ENCODE measurements at regions of chr1 and their contacts with region 1.

Region 1: GRCh38 chr1:223748773-223749733 is 36.7 kb downstream of the CAPN2 start:
- DNase-seq: no peak
- H3K4me3 ChIP-seq: peak overlapping the region; percentile 27; the same call in 1 of the 2 replicates
- CTCF ChIP-seq: peak; percentile 80

Region 2: GRCh38 chr1:223700942-223701637 is 48.0 kb before region 1 on chr1:
- CTCF ChIA-PET with region 1: interaction called, 122 read pairs
- POLR2A ChIA-PET with region 1: interaction called, 8 read pairs
- DNase-seq: peak; percentile 97
- H3K4me3 ChIP-seq: peak overlapping the region; percentile 52
- CTCF ChIP-seq: no peak

Region 3: DNA sequence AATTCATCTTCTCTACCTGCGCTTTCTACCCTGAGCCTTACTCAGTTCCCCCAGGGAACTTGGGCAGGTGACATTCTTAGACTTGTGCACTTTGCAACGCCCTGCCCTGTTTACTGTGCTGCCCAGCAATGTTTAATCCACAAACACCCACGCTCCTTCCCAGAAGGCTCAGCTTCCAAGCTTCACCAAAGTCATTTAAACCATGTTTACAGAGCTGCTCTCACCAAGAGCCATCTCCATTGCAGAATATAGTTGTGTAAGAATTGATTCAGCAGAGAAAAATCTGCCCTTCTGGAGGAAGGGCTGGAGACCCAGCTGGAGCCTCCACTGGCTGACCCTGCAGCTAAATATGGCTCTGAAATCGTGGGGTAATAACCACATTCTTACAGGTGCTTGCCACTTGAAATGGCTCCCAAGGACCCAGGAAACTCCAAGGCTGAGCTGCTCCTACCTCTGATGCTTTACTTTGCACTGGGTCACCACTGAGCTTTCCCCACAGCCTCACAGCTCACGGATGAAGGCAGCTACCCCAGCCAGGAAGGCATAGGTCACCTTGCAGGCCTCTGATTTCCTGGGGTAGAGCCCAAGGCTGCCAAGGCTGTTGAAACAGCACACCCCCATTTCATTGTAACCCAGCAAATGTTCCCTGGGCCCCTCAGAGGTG is 28.0 kb before region 1 on chr1:
- CTCF ChIA-PET with region 1: interaction called, 62 read pairs
- POLR2A ChIA-PET with region 1: interaction called, 3 read pairs
- DNase-seq: no peak
- H3K4me3 ChIP-seq: no peak overlapping the region
- CTCF ChIP-seq: no peak

Region 4: GRCh38 chr1:223732992-223733798 is 15.9 kb before region 1 on chr1:
- CTCF ChIA-PET with region 1: interaction called, 62 read pairs
- POLR2A ChIA-PET with region 1: interaction called, 3 read pairs
- DNase-seq: no peak
- H3K4me3 ChIP-seq: no peak overlapping the region
- CTCF ChIP-seq: no peak

Region 5: DNA sequence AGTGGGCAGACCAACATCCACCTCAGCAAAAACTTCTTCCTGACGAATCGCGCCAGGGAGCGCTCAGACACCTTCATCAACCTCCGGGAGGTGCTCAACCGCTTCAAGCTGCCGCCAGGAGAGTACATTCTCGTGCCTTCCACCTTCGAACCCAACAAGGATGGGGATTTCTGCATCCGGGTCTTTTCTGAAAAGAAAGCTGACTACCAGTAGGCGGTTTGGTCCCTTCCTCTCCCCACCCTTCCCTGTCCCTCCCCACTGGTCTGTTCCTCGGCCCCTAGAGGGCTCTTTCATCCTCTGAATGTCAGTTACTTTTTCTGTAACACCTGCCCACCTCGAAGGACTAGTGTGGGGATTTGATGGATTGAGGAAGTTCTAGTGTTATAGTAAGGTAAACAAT is 10.2 kb after region 1 on chr1:
- CTCF ChIA-PET with region 1: interaction called, 39 read pairs
- POLR2A ChIA-PET with region 1: no interaction called
- DNase-seq: no peak
- H3K4me3 ChIP-seq: no peak overlapping the region
- CTCF ChIP-seq: no peak

Region 6: GRCh38 chr1:223771814-223772770 is 23.0 kb after region 1 on chr1:
- CTCF ChIA-PET with region 1: interaction called, 20 read pairs
- POLR2A ChIA-PET with region 1: no interaction called
- DNase-seq: peak; percentile 50
- H3K4me3 ChIP-seq: no peak overlapping the region
- CTCF ChIP-seq: no peak

Region 7: DNA sequence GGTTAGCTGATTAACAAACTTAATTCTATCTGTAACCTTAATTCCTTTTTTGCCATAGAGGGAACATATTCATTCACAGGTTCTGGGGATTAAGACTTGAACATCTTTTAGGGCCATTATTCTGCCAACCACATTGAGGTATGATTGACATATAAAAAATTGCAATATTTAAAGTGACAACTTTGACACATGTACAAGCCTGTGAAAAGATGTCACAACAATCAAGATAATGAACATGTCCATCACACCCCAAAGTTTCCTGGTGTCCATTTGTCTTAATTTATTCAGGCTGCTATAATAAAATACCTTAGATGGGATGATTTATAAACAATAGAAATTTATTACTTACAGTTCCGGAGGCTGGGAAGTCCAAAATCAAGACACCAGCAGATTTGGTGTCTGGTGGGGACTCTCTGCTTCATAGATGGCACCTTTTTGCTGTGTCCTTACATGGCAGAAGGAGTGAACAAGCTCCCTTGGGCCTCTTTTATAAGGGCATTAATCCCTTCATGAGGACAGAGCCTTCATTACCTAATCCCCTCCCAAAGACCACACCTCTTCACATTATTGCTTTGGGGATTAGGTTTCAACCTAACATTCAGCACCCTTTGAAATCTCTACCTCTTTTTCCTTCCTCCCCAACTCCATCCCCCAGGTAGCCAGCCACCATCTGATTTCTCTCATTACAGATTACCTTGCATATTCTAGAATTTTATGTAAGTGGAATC is 129.7 kb after region 1 on chr1:
- CTCF ChIA-PET with region 1: no interaction called
- POLR2A ChIA-PET with region 1: no interaction called
- DNase-seq: no peak
- H3K4me3 ChIP-seq: no peak overlapping the region
- CTCF ChIP-seq: no peak

Measured in AG04449 (cell line).